MCF 10A (cell line): ENCODE measurements at regions of chr20 and their contacts with region 1.

Region 1: GRCh38 chr20:7285918-7286556 is 518.6 kb downstream of the BMP2 start:
- DNase-seq: peak; percentile 88
- H3K4me3 Mint-ChIP-seq: no peak overlapping the region
- H3K27ac Mint-ChIP-seq: no peak overlapping the region
- H3K4me1 Mint-ChIP-seq: no peaks in the 10 kb centered on the region
- H3K27me3 Mint-ChIP-seq: no peaks in the 10 kb centered on the region
- CTCF ChIP-seq: peak; percentile 76

Region 2: DNA sequence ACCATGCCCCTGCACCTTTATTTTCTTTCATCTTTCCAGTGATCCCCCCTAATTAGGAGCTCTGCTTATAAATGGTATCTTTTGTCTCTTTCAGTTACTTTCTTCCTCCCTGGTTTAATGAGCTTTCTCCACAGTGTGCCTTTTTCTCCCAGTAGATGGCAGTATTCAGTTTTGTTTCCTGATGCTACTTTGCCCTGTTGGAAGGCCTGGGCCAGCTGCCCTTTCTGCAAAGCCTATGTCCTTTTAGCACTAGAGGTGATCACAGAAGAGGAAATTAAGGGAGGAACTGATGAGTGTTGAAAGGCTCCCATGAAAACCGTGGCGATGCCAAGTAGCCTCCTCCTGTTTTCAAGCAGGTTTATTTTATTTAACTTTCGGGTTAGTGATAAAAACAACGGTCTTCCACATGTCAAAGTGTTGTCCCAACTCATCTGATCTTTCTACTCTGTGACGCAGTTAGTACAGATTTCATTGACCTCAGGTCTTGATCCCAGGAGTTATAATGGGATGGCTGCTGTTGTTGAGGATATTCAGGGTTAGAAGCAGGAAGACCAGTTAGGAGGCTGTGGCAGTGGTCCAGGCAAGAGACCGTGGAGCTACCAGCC is 702.8 kb before region 1 on chr20:
- CTCF ChIA-PET with region 1: interaction called, 10 read pairs
- POLR2A ChIA-PET with region 1: no interaction called
- intact Hi-C with region 1: loop called (anchors 2 kb)
- DNase-seq: peak; percentile 78
- H3K4me3 Mint-ChIP-seq: no peak overlapping the region
- H3K27ac Mint-ChIP-seq: no peak overlapping the region
- H3K4me1 Mint-ChIP-seq: peaks cover 23% of the 10 kb centered on the region
- H3K27me3 Mint-ChIP-seq: no peaks in the 10 kb centered on the region
- CTCF ChIP-seq: peak; percentile 66

Region 3: GRCh38 chr20:6663104-6663503 is 622.9 kb before region 1 on chr20:
- CTCF ChIA-PET with region 1: no interaction called
- POLR2A ChIA-PET with region 1: no interaction called
- intact Hi-C with region 1: no loop called
- DNase-seq: peak; percentile 13
- H3K4me3 Mint-ChIP-seq: no peak overlapping the region
- H3K27ac Mint-ChIP-seq: no peak overlapping the region
- H3K4me1 Mint-ChIP-seq: peaks cover 28% of the 10 kb centered on the region
- H3K27me3 Mint-ChIP-seq: no peaks in the 10 kb centered on the region
- CTCF ChIP-seq: no peak

Region 4: GRCh38 chr20:6828794-6829423 is 457.1 kb before region 1 on chr20:
- CTCF ChIA-PET with region 1: interaction called, 41 read pairs
- POLR2A ChIA-PET with region 1: interaction called, 7 read pairs
- intact Hi-C with region 1: loop called (anchors 1 kb)
- DNase-seq: peak; percentile 82
- H3K4me3 Mint-ChIP-seq: no peak overlapping the region
- H3K27ac Mint-ChIP-seq: no peak overlapping the region
- H3K4me1 Mint-ChIP-seq: no peaks in the 10 kb centered on the region
- H3K27me3 Mint-ChIP-seq: no peaks in the 10 kb centered on the region
- CTCF ChIP-seq: peak; percentile 47

Region 5: DNA sequence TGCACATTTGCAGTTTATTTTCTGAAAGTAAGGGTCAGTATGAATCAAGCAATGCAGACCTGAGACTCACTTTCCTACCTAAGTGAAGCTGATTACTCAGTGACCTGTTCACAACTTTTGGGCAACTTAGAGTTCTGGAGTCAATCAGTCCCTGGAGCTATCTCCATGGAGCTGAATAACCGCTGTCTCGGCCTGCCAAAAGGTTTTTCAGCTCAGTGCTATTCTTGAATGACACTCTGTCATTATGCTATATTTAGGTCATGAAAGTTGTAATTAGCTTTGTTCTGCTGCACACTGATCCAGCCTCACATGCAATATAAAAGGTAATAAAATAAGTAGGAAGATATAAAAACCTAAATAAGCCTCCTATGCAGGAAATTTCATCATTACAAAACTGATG is 162.6 kb before region 1 on chr20:
- CTCF ChIA-PET with region 1: interaction called, 11 read pairs
- POLR2A ChIA-PET with region 1: no interaction called
- intact Hi-C with region 1: no loop called
- DNase-seq: no peak
- H3K4me3 Mint-ChIP-seq: no peak overlapping the region
- H3K27ac Mint-ChIP-seq: no peak overlapping the region
- H3K4me1 Mint-ChIP-seq: no peaks in the 10 kb centered on the region
- H3K27me3 Mint-ChIP-seq: no peaks in the 10 kb centered on the region
- CTCF ChIP-seq: no peak

Region 6: DNA sequence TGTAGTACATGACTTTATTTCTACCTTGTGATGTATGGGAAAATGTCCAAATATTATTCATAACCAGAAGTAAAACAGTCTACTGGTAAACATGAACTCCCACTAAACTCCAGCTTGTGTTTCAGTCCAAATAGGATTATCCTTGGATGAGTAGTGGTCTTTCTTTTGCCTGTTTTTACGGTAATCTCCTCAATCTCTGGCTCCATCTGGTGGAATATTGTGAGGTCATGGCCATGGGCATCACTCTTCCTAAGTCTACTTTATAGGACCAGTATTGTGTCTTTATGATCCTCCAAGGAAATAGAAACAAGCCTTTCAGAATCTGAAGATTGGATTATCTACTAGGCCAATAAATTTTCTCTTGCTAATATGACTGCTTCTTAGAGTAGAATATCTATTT is 13.5 kb before region 1 on chr20:
- CTCF ChIA-PET with region 1: interaction called, 18 read pairs
- POLR2A ChIA-PET with region 1: interaction called, 4 read pairs
- intact Hi-C with region 1: no loop called
- DNase-seq: peak; percentile 18
- H3K4me3 Mint-ChIP-seq: no peak overlapping the region
- H3K27ac Mint-ChIP-seq: no peak overlapping the region
- H3K4me1 Mint-ChIP-seq: no peaks in the 10 kb centered on the region
- H3K27me3 Mint-ChIP-seq: no peaks in the 10 kb centered on the region
- CTCF ChIP-seq: peak; percentile 35

Region 7: GRCh38 chr20:7355056-7355455 is 69.0 kb after region 1 on chr20:
- CTCF ChIA-PET with region 1: interaction called, 11 read pairs
- POLR2A ChIA-PET with region 1: no interaction called
- intact Hi-C with region 1: no loop called
- DNase-seq: no peak
- H3K4me3 Mint-ChIP-seq: no peak overlapping the region
- H3K27ac Mint-ChIP-seq: no peak overlapping the region
- H3K4me1 Mint-ChIP-seq: peaks cover 5% of the 10 kb centered on the region
- H3K27me3 Mint-ChIP-seq: no peaks in the 10 kb centered on the region
- CTCF ChIP-seq: no peak

Region 8: GRCh38 chr20:7673841-7674240 is 387.8 kb after region 1 on chr20:
- CTCF ChIA-PET with region 1: no interaction called
- POLR2A ChIA-PET with region 1: no interaction called
- intact Hi-C with region 1: no loop called
- DNase-seq: peak; percentile 48
- H3K4me3 Mint-ChIP-seq: no peak overlapping the region
- H3K27ac Mint-ChIP-seq: no peak overlapping the region
- H3K4me1 Mint-ChIP-seq: no peaks in the 10 kb centered on the region
- H3K27me3 Mint-ChIP-seq: no peaks in the 10 kb centered on the region
- CTCF ChIP-seq: no peak

Region 9: DNA sequence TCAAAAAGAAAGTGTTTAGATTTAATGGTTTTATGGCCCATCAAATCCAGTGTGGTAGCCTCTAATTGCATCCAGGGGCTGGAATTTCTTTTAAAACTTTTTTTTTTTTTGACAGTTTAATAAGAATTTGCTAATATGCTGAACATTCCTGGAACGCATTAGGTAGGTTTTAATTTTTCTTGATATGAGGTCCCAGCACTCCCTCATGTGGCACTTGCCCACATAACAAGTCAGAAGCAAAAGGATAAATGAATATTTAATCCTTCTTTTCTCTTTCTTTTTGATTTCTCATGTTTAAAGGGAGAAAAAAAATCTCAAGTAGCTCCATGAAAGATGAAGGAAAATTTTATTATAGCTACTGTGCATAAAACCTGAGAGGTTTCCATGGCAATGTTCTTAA is 640.7 kb after region 1 on chr20:
- CTCF ChIA-PET with region 1: interaction called, 8 read pairs
- POLR2A ChIA-PET with region 1: no interaction called
- intact Hi-C with region 1: loop called (anchors 5 kb)
- DNase-seq: peak; percentile 50
- H3K4me3 Mint-ChIP-seq: no peak overlapping the region
- H3K27ac Mint-ChIP-seq: no peak overlapping the region
- H3K4me1 Mint-ChIP-seq: peaks cover 9% of the 10 kb centered on the region
- H3K27me3 Mint-ChIP-seq: no peaks in the 10 kb centered on the region
- CTCF ChIP-seq: peak; percentile 59